ENCODE measurements at regions of chr2 and their contacts with region 1.

Region 1: GRCh38 chr2:15939854-15940660 is at the start of gene MYCN:
- DNase-seq: peak; percentile 92 to 95
- H3K4me3 ChIP-seq: peak within 1 kb of the TSS; percentile 75
- H3K4me3 Mint-ChIP-seq: peak within 1 kb of the TSS; percentile 85
- H3K27ac Mint-ChIP-seq: peak within 1 kb of the TSS; percentile 69
- H3K4me1 ChIP-seq: peaks cover 19% of the 10 kb centered on the region
- H3K4me1 Mint-ChIP-seq: peaks cover 17% of the 10 kb centered on the region
- H3K27me3 ChIP-seq: no peaks in the 10 kb centered on the region
- H3K27me3 Mint-ChIP-seq: no peaks in the 10 kb centered on the region
- CTCF ChIP-seq: peak in 1 of 2 experiments; percentile 80
- total RNA-seq, gene MYCN: 46.6 and 54.4 TPM in 2 replicates

Region 2: DNA sequence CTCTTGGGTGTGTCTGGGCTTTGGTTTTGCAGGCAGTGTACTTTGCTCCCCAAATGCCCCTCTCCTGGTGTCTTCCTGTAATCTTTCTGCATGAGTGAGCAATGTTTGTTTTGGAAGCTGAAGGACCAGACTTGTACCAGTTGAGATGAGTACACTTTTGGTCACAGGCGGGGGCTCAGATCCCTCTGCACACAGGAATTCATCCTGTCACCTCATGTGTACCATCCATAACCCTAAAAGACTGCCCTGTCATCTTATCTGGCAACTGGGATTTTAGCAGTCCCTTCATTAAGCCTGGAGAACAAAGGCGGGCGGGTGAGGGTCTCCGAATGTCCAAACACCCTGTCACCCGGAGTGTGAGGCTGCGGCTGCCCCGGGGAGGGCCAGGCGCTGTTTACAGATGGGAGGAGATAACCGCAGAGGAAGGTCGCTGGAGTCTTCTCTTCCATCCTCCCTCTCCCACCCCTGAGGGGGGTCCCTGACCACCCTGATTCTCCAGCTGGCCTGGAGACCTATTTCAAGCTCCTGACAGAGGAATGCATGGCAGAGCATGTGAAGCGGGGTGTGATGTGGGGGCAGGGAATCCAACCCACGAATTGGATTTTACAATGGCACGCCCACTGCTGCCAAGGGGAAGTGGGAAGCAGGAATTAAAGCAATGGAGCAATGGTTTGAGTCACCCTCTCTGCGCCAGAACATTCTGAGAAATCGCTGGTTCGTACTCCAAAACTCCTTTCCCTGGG is 157.9 kb before region 1 on chr2:
- CTCF ChIA-PET with region 1: interaction called, 3 read pairs
- POLR2A ChIA-PET with region 1: no interaction called
- intact Hi-C with region 1: loop called (anchors 5 kb)
- DNase-seq: peak; percentile 92 to 95
- H3K4me3 ChIP-seq: no peak overlapping the region
- H3K4me3 Mint-ChIP-seq: peak overlapping the region; percentile 31
- H3K27ac Mint-ChIP-seq: peak overlapping the region; percentile 17
- H3K4me1 ChIP-seq: peaks cover 44% of the 10 kb centered on the region
- H3K4me1 Mint-ChIP-seq: peaks cover 45% of the 10 kb centered on the region
- H3K27me3 ChIP-seq: no peaks in the 10 kb centered on the region
- H3K27me3 Mint-ChIP-seq: no peaks in the 10 kb centered on the region
- CTCF ChIP-seq: no peak

Region 3: GRCh38 chr2:15881676-15882075 is 58.4 kb before region 1 on chr2:
- CTCF ChIA-PET with region 1: no interaction called
- POLR2A ChIA-PET with region 1: no interaction called
- intact Hi-C with region 1: no loop called
- DNase-seq: no peak
- H3K4me3 ChIP-seq: no peak overlapping the region
- H3K4me3 Mint-ChIP-seq: no peak overlapping the region
- H3K27ac Mint-ChIP-seq: no peak overlapping the region
- H3K4me1 ChIP-seq: peaks cover 3% of the 10 kb centered on the region
- H3K4me1 Mint-ChIP-seq: peaks cover 4% of the 10 kb centered on the region
- H3K27me3 ChIP-seq: no peaks in the 10 kb centered on the region
- H3K27me3 Mint-ChIP-seq: no peaks in the 10 kb centered on the region
- CTCF ChIP-seq: no peak

Region 4: DNA sequence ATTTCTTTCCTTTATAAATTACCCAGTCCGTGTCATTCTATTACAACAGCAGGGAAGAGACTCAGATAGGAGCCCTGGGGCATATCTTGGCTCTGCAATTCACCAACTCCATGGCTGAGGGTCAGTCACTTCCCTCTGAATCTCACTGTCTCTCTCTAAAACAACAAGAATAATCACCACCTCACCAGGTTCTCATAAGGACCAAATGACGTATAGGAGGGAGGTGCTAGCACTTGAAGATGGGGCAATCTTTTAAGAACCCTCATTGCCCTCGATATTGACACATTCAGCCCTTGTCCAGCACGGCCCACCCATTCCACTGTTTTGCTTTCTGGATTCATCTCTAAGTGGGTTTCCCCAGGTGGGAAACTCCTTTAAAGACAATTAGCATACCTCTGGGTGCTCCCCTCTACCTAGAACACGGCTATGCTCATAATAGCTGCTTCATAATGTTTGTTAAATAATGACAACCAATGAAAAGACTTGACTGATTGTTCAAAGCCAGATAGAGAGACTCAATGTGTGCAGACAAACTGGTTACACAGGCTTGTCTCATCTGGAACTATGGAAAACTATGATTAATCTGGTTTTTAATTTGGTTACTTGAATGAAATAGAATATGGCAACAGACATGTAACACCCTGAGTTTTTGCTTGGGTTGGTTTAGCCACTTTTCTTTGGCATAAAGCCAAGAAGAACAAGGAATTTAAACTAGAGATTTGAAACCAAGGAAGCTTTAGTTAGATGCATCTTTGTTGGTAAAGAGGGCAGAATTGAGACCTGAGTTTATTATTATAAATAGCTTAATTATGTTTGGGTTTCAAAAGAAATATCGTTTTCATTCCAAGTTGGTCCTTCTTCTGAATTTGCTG is 15.5 kb after region 1 on chr2:
- CTCF ChIA-PET with region 1: no interaction called
- POLR2A ChIA-PET with region 1: no interaction called
- intact Hi-C with region 1: no loop called
- DNase-seq: no peak
- H3K4me3 ChIP-seq: no peak overlapping the region
- H3K4me3 Mint-ChIP-seq: no peak overlapping the region
- H3K27ac Mint-ChIP-seq: no peak overlapping the region
- H3K4me1 ChIP-seq: peaks cover 6% of the 10 kb centered on the region; the same call in 1 of the 2 replicates
- H3K4me1 Mint-ChIP-seq: peaks cover 13% of the 10 kb centered on the region
- H3K27me3 ChIP-seq: no peaks in the 10 kb centered on the region
- H3K27me3 Mint-ChIP-seq: no peaks in the 10 kb centered on the region
- CTCF ChIP-seq: no peak

Region 5: GRCh38 chr2:16012619-16013358 is 72.7 kb after region 1 on chr2:
- CTCF ChIA-PET with region 1: interaction called, 3 read pairs
- POLR2A ChIA-PET with region 1: no interaction called
- intact Hi-C with region 1: loop called (anchors 2 kb)
- DNase-seq: peak; percentile 83
- H3K4me3 ChIP-seq: peak overlapping the region; percentile 26; the same call in 1 of the 2 replicates
- H3K4me3 Mint-ChIP-seq: peak overlapping the region; percentile 75
- H3K27ac Mint-ChIP-seq: peak overlapping the region; percentile 96
- H3K4me1 ChIP-seq: peaks cover 18% of the 10 kb centered on the region; the same call in 1 of the 2 replicates
- H3K4me1 Mint-ChIP-seq: peaks cover 26% of the 10 kb centered on the region
- H3K27me3 ChIP-seq: no peaks in the 10 kb centered on the region
- H3K27me3 Mint-ChIP-seq: no peaks in the 10 kb centered on the region
- CTCF ChIP-seq: no peak

Region 6: GRCh38 chr2:16114836-16115235 is 174.8 kb after region 1 on chr2:
- CTCF ChIA-PET with region 1: no interaction called
- POLR2A ChIA-PET with region 1: interaction called, 4 read pairs
- intact Hi-C with region 1: loop called (anchors 2 kb)
- DNase-seq: peak; percentile 83 to 88
- H3K4me3 ChIP-seq: no peak overlapping the region
- H3K4me3 Mint-ChIP-seq: no peak overlapping the region
- H3K27ac Mint-ChIP-seq: no peak overlapping the region
- H3K4me1 ChIP-seq: peaks cover 36% of the 10 kb centered on the region
- H3K4me1 Mint-ChIP-seq: peaks cover 12% of the 10 kb centered on the region
- H3K27me3 ChIP-seq: no peaks in the 10 kb centered on the region
- H3K27me3 Mint-ChIP-seq: no peaks in the 10 kb centered on the region
- CTCF ChIP-seq: no peak

Region 7: GRCh38 chr2:16394072-16394985 is 454.3 kb after region 1 on chr2:
- CTCF ChIA-PET with region 1: interaction called, 4 read pairs
- POLR2A ChIA-PET with region 1: interaction called, 5 read pairs
- intact Hi-C with region 1: loop called (anchors 1 kb)
- DNase-seq: peak; percentile 65 to 74
- H3K4me3 ChIP-seq: no peak overlapping the region
- H3K4me3 Mint-ChIP-seq: no peak overlapping the region
- H3K27ac Mint-ChIP-seq: no peak overlapping the region
- H3K4me1 ChIP-seq: peaks cover 60% of the 10 kb centered on the region
- H3K4me1 Mint-ChIP-seq: peaks cover 13% of the 10 kb centered on the region
- H3K27me3 ChIP-seq: no peaks in the 10 kb centered on the region
- H3K27me3 Mint-ChIP-seq: no peaks in the 10 kb centered on the region
- CTCF ChIP-seq: no peak

Region 8: GRCh38 chr2:16608661-16609643 is 668.9 kb after region 1 on chr2:
- CTCF ChIA-PET with region 1: interaction called, 10 read pairs
- POLR2A ChIA-PET with region 1: interaction called, 4 read pairs
- intact Hi-C with region 1: loop called (anchors 1 kb)
- DNase-seq: peak; percentile 86 to 92
- H3K4me3 ChIP-seq: peak overlapping the region; percentile 53
- H3K4me3 Mint-ChIP-seq: peak overlapping the region; percentile 77
- H3K27ac Mint-ChIP-seq: peak overlapping the region; percentile 34
- H3K4me1 ChIP-seq: no peaks in the 10 kb centered on the region
- H3K4me1 Mint-ChIP-seq: peaks cover 7% of the 10 kb centered on the region
- H3K27me3 ChIP-seq: no peaks in the 10 kb centered on the region
- H3K27me3 Mint-ChIP-seq: peaks cover 7% of the 10 kb centered on the region
- CTCF ChIP-seq: peak; percentile 93 to 95

Measured in Caco-2 (cell line).